ENCODE measurements at regions of chr2 and their contacts with region 1.

Region 1: GRCh38 chr2:134137182-134137611 is 116.7 kb upstream of the MGAT5 start:
- DNase-seq: no peak
- H3K4me3 ChIP-seq: peak overlapping the region in 16 of 59 donors; percentile 1 to 44 (median 14)
- H3K27ac ChIP-seq: peak overlapping the region in 52 of 59 donors; percentile 11 to 91 (median 58)
- H3K27me3 ChIP-seq: no peaks in the 10 kb centered on the region
- CTCF ChIP-seq: peak in 1 of 56 donors; percentile 15

Region 2: GRCh38 chr2:133892352-133892913 is 244.8 kb before region 1 on chr2:
- intact Hi-C with region 1: no loop called
- DNase-seq: no peak
- H3K4me3 ChIP-seq: no peak overlapping the region
- H3K27ac ChIP-seq: no peak overlapping the region
- H3K27me3 ChIP-seq: no peaks in the 10 kb centered on the region
- CTCF ChIP-seq: no peak

Region 3: DNA sequence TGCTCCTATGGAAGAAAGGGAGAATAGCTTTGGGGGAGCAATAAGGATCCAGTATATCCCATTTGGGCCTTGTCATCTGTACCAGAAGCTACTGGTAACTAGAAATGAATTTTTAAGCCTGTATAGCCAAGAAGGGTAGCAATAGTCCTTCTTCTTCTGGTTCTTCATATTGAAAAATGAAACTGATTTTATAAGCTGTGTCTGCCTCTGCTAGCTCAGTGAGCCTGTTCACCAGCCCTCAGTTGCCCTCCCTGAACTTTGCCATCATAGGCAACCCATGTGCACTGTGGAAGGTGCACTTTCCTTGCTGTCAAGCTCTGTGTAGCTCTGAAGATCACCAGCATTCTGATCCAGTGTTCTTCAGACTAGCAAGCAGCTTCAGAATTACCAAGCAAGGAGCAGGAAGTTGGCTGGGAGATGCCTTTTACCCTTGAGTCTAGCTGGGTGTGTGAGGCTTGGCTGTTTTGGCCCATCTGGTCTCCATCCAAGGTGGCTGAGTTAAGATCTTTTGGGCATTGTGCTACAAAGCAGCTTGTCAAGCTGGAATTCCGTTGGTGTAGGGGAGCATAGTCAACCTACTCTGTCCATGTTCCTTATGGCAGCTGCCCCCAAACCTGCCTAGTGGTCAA is 60.9 kb after region 1 on chr2:
- intact Hi-C with region 1: loop called in 1 of 2 experiments (anchors 5 kb)
- DNase-seq: no peak
- H3K4me3 ChIP-seq: no peak overlapping the region
- H3K27ac ChIP-seq: peak overlapping the region in 8 of 59 donors; percentile 3 to 24 (median 12)
- H3K27me3 ChIP-seq: no peaks in the 10 kb centered on the region
- CTCF ChIP-seq: no peak

Measured in dorsolateral prefrontal cortex (tissue), 120 donors.